Psoas muscle (tissue), 8 donors: ENCODE measurements at regions of chr13 and their contacts with region 1.

Region 1: GRCh38 chr13:106496072-106496997 is 39.1 kb downstream of the EFNB2 start:
- DNase-seq: no peak
- ATAC-seq: peak in 2 of 4 donors; percentile 67
- H3K4me3 ChIP-seq: peak overlapping the region; percentile 13
- H3K27ac ChIP-seq: peak overlapping the region; percentile 47
- H3K4me1 ChIP-seq: peaks cover 50% of the 10 kb centered on the region
- H3K27me3 ChIP-seq: no peaks in the 10 kb centered on the region
- CTCF ChIP-seq: no peak

Region 2: GRCh38 chr13:106523566-106523965 is 27.2 kb after region 1 on chr13:
- intact Hi-C with region 1: loop called in 1 of 2 experiments (anchors 2 kb)
- DNase-seq: no peak
- ATAC-seq: no peak
- H3K4me3 ChIP-seq: no peak overlapping the region
- H3K27ac ChIP-seq: no peak overlapping the region
- H3K4me1 ChIP-seq: peaks cover 17% of the 10 kb centered on the region
- H3K27me3 ChIP-seq: no peaks in the 10 kb centered on the region
- CTCF ChIP-seq: no peak